Activated CD4-positive, alpha-beta memory T cell treated with anti-CD3 and anti-CD28 coated beads for 36 hours (primary cell): ENCODE measurements at regions of chr6 and their contacts with region 1.

Region 1: GRCh38 chr6:33014841-33015634 is 5.6 kb upstream of the HLA-DOA start:
- DNase-seq: peak; percentile 34
- H3K4me3 Mint-ChIP-seq: no peak overlapping the region
- H3K27ac Mint-ChIP-seq: no peak overlapping the region
- H3K4me1 Mint-ChIP-seq: peaks cover 12% of the 10 kb centered on the region
- H3K27me3 Mint-ChIP-seq: peaks cover 15% of the 10 kb centered on the region

Region 2: DNA sequence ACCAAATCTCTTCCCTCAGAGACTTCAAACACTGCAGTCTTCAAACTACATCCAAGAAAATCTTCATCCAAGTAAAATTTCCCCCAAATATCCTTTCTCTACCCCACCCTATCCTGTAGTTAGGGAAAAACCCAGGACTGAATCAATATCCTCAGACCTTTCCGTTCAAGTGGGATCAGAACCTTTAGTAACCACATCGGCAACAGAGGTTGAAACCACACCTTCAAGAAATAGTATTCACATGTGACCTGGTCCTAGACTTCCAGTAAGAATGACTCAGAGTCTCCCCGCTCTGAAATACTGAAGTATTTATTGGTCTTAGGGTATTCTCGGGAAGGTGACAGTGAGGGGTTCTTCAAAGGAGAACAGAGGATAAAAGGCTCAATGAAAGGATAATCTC is 49.7 kb after region 1 on chr6:
- CTCF ChIA-PET with region 1: no interaction called
- POLR2A ChIA-PET with region 1: no interaction called
- intact Hi-C with region 1: no loop called
- DNase-seq: no peak
- H3K4me3 Mint-ChIP-seq: no peak overlapping the region
- H3K27ac Mint-ChIP-seq: no peak overlapping the region
- H3K4me1 Mint-ChIP-seq: no peaks in the 10 kb centered on the region
- H3K27me3 Mint-ChIP-seq: peaks cover 3% of the 10 kb centered on the region

Region 3: DNA sequence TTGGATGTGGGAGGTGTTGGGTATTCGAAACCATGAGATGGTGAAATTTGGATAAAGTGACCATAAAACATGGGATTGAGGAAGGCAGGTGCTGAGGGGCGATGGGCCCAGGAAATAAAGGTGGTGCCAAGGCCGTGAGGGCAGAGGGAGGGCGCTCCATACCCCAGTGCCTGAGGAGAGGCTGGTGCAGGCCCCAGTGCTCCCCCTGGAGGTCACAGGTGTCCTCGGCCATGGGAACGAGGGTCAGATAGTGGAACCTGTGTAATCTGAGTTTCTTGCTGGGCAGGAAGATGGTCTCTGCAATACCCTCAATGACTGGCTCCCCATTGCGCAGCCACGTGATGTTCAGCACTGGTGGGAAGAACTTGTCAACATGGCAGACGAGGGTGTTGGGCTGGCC is 76.9 kb after region 1 on chr6:
- CTCF ChIA-PET with region 1: interaction called, 22 read pairs
- POLR2A ChIA-PET with region 1: no interaction called
- intact Hi-C with region 1: loop called (anchors 1 kb)
- DNase-seq: peak; percentile 71
- H3K4me3 Mint-ChIP-seq: no peak overlapping the region
- H3K27ac Mint-ChIP-seq: no peak overlapping the region
- H3K4me1 Mint-ChIP-seq: no peaks in the 10 kb centered on the region
- H3K27me3 Mint-ChIP-seq: peaks cover 13% of the 10 kb centered on the region

Region 4: DNA sequence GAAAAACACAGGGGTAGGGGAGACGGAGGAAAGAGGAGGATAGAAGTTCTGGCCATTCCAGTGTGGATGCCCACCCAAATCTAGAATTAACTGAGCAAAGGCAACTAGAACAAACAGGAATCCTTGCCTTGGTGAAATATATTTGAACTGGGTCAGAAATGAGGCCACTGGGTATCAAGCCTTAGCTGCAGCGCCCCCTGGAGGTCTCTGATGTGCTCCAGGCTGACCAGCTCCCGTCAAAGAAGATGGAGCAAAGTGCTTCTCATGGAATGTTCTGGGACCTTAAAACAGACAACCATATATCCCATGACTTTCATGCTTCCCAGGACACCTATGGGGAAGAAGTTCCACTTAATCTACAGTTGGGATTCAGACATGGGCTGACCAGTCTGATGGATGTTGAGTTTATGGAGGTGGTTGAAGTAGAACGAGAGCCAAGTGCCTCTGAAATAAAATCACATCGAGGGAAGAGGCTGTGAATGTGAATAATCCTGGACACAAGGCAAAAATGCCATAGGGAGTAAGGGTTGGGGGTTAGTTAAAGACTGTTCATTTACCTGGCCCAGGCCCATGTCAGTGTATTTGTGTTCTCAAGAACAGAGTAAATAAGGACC is 111.2 kb after region 1 on chr6:
- CTCF ChIA-PET with region 1: interaction called, 31 read pairs
- POLR2A ChIA-PET with region 1: no interaction called
- intact Hi-C with region 1: no loop called
- DNase-seq: peak; percentile 75
- H3K4me3 Mint-ChIP-seq: no peak overlapping the region
- H3K27ac Mint-ChIP-seq: no peak overlapping the region
- H3K4me1 Mint-ChIP-seq: no peaks in the 10 kb centered on the region
- H3K27me3 Mint-ChIP-seq: peaks cover 26% of the 10 kb centered on the region